ENCODE measurements at regions of chr14 and their contacts with region 1.

Region 1: DNA sequence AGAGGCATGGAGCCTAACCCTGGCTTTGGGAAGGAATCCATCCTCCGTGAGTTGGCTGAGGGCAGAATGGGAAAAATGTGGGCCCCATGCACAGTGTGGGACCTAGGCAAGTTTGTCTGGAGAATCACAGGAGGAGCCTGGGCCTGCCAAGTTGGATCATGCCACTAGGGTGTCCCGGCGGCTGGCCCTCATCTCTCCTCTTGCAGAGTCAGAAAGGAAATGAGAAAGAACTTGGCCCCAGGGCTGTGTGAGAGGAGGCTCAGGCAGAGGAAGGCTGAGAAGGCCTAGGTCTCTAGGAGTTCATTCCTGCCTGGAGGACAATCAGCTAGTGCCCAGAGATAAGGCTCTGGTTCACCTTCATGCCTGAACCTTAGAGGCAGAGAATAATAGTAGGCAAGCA is 2.5 kb upstream of the ESRRB start:
- DNase-seq: no peak
- H3K4me3 ChIP-seq: no peak overlapping the region
- H3K27ac ChIP-seq: no peak overlapping the region
- H3K4me1 ChIP-seq: peaks cover 0 to 19% of the 10 kb centered on the region in 2 donors
- H3K27me3 ChIP-seq: peaks cover 0 to 39% of the 10 kb centered on the region in 2 donors
- CTCF ChIP-seq: no peak
- POLR2A ChIP-seq: no peak

Region 2: GRCh38 chr14:75689012-75689411 is 684.4 kb before region 1 on chr14:
- intact Hi-C with region 1: loop called (anchors 5 kb)
- DNase-seq: no peak
- H3K4me3 ChIP-seq: no peak overlapping the region
- H3K27ac ChIP-seq: no peak overlapping the region
- H3K4me1 ChIP-seq: no peaks in the 10 kb centered on the region
- H3K27me3 ChIP-seq: no peaks in the 10 kb centered on the region
- CTCF ChIP-seq: no peak
- POLR2A ChIP-seq: no peak

Region 3: DNA sequence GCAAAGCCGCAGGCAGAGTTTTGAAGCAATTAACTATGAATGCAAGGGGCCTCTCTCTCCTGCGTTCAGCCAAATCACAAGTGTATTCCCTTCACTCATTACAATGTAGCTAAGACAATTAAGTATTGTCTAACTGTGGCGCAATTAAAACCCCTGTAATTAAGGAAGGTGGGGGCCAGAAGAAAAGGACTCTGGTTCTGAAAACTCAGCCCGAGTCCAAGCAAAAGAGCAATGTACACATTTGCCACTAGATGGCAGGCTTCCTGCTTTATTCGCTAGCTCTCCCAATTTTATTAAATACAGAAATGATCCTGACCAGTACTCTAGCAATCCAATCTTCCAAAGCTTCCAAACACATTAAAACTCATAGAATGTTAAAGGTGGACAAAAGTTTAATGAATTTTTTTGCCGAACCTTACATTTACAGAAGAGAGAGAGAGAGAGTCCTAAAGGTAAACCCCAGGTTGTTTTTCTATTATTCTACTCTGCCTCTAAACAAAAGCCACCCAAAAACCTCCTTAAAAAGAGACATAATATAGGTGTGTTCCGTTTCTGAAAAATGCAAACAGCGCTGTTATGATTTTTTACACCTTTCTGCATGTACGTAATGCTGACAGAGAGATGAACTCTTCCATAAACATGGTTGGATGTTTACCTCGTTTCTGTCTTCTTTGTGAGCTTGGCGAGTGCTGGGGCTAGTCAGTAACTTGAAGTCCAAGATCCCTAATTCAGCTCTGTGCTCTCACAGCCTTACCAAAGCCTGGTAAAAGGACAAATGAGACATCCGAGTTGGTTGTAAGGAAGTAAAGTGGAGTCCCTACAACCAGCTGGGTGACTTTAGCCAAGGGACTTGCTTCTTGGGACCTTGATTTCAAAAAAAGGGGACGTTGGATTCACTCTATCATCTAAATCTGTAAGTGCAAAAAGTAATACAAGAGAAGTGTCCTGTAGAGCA is 336.9 kb after region 1 on chr14:
- intact Hi-C with region 1: no loop called
- DNase-seq: no peak
- H3K4me3 ChIP-seq: no peak overlapping the region
- H3K27ac ChIP-seq: no peak overlapping the region
- H3K4me1 ChIP-seq: no peaks in the 10 kb centered on the region
- H3K27me3 ChIP-seq: no peaks in the 10 kb centered on the region
- CTCF ChIP-seq: peak; percentile 37 to 59 (median 58)
- POLR2A ChIP-seq: no peak